ENCODE measurements at regions of chr1 and their contacts with region 1.

Region 1: DNA sequence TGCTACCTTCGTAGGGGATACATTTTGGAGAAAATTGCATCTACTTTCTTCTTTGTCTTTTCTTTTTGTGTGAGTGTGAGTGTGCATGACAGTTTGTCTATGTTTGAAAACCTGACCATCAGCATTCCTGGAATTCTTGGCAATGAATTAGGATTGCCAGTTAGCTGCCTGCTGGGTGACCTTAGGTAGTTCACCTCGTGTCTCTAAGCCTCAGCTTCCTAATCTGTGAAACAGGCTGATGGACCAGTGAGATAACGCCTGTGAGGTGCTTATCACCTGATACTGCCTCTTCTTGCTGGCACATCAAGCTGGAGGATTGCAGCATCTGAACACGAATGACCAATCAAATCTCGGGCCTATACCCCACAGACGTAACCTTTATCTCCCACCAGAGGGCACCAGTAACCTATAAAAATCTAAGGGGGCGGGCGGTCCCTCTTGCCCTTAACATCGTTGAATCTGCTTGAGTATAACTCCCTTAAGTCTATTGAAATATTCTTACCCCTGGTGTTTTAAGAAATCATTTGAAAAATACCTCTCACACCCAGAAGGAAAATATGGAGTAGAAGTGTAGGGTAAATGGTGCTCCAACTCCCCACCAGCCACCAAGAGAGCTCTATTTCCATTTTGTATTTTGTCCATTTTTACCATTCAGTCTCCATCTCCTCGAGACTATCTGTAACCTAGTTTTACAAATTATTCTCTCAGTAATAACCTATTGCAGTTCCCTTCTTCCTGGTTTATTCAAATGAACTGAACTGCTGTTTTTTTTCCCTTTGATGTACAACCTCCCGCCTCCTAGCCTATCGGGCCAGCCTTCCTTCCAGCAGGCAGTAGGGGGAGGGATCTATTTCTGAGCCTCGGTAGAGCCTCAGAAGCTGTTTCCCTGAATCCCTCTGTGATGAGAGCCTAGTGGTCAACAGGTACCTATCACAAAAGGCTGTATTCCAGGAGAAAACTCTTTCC is 49.7 kb downstream of the MDM4 start:
- DNase-seq: peak; percentile 48
- H3K4me3 ChIP-seq: no peak overlapping the region
- H3K27ac ChIP-seq: no peak overlapping the region
- H3K4me1 ChIP-seq: no peaks in the 10 kb centered on the region
- H3K27me3 ChIP-seq: no peaks in the 10 kb centered on the region
- CTCF ChIP-seq: peak; percentile 66

Region 2: DNA sequence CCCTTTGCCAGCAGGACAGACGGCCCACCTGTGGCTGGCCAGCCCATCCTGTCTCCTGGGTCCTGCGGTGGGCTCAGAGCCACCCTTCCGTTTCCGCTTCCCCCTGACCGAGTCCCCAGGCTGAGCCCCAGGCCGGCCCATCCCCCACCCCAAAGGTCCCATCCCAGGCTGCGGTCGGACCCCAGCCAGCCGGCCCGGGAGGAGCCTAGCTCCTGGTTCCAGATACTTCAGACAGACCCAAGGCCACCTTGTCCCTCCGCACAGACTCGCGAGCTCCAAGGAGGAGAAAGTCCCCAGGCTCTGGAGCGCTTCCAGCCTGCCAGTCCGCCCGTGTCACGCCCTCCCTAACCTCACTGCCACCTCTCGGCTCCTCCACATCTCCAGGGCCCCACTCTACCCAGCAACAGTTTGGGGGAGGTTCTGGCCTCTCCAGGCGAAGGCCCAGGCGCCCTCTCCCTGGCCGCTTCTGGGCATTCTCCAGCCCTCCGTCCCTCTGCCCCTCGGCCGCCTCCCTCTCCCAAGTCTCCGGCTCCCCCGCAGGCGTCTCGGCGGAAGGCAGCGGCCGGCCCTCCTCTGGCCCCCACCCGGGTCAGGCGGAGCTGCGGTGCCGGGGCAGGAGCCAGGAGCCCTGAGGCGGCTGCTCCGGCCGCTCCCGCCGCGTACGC is 118.8 kb after region 1 on chr1:
- intact Hi-C with region 1: no loop called
- DNase-seq: peak; percentile 49
- H3K4me3 ChIP-seq: peak overlapping the region; percentile 56
- H3K27ac ChIP-seq: peak overlapping the region; percentile 24
- H3K4me1 ChIP-seq: peaks cover 6% of the 10 kb centered on the region
- H3K27me3 ChIP-seq: peaks cover 3% of the 10 kb centered on the region
- CTCF ChIP-seq: no peak

Region 3: DNA sequence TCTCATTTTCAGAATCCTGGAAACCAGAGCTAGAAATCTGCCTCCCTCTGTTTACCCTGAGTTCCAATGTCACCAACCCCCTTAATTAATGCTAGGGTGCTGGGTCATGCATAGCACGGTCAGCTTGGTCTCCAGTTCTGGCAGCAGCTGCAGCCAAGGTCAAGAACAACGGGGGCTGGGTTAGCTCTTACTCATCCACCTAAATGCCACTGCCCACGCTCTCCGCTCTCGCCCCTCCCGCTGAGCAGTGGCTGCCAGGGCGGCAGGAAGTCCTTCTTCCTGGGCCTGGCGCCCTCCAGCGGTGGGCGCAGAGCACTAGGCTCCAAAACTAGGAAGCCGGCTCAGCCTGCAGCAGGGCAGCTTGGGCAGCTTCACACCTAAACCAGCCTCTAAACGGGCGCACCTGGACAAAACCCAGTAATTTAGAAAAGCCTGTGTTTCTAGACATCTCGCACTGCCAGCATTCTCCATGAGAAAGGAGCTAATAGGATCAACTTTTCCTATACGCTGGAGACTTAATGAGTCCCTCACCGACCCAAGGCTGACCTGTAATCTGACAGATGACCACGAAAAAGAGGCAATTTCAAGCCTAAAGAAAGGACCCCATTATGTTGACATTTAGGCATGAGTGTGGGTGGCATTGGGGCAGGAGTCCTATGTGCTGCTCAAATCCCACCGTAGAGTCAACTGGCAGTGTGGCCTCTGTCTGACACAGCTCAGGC is 198.0 kb after region 1 on chr1:
- intact Hi-C with region 1: loop called (anchors 2 kb)
- DNase-seq: peak; percentile 73
- H3K4me3 ChIP-seq: no peak overlapping the region
- H3K27ac ChIP-seq: no peak overlapping the region
- H3K4me1 ChIP-seq: no peaks in the 10 kb centered on the region
- H3K27me3 ChIP-seq: no peaks in the 10 kb centered on the region
- CTCF ChIP-seq: peak; percentile 84

Region 4: DNA sequence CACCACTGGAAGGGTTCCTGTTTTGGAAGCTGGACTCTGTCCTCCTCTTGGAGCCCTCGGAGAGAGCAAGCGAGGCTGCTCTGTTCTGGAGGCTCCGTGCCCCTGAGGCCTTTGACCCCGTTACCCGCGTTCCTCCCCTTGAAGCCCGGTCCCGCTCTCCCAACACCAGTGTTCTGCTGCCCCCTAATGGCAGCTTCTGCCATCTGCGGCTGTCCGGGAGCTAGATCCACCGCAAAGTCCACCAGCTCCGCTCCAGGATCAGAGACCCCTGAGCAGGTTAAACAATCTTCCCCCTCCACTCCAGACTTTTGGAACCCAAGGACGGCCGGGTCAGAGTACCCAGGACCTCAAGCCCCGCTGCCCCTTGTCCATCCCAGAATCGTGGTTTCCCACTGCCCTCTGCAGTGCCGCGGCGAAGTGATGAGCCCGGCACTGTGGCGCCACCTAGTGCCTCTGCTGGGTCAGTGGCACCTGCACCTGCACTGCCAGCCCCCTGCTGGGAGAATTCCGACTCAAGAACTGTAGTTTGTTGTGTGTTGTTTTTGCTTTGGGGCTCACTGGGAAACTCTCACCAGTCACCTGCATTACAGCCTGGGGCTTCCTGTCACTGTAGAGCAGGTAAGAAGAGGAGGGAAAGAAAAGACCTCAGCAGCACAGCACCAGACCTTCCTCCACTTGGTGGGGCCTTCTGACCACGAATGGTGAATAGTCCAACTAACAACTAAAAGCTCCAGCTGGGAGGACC is 241.2 kb after region 1 on chr1:
- intact Hi-C with region 1: loop called (anchors 2 kb)
- DNase-seq: peak; percentile 87
- H3K4me3 ChIP-seq: peak overlapping the region; percentile 26
- H3K27ac ChIP-seq: no peak overlapping the region
- H3K4me1 ChIP-seq: no peaks in the 10 kb centered on the region
- H3K27me3 ChIP-seq: no peaks in the 10 kb centered on the region
- CTCF ChIP-seq: peak; percentile 95

Region 5: DNA sequence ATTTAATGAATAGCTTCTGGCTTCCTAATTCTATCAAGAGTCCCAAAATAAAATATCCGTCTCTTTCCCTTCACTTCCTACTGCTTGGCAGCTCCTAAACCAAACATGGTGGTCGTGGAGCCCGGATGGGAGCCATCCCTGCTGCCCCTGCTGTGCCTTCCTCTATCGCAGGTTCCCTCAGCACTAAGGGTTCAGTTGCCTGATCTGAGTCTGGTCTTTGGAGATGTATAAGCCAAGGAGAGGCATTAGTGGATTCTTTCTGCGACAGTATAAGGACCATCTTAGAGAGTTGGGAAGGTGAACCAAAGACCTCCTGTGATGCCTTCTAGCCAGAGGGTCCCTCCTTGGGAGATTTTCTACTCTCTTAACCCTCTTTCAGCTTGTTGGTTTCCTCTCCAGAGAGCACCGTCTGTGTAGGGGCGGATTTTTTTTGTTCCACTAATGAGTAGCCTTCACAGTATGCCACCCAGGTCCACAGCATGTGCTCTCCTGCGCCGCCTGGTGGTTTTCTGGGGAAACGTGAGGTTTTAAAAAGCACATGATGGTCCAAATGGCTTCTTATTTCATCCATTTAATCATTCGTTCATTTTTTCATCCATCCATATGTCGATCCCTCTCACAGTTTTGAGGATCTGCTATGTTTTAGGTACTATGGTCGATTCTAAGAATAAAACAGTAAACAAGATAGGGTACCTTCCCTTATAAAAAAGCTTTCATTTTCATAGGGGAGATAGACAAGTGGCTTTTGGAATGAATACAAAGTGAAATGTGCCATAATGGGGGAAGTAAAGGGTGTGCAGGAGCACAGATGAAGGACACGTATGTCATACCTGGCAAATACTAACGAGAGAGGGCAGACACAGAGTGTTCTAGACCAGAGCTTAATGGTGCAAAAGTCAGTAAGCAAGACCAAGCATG is 375.8 kb after region 1 on chr1:
- intact Hi-C with region 1: loop called (anchors 10 kb)
- DNase-seq: peak; percentile 76
- H3K4me3 ChIP-seq: no peak overlapping the region
- H3K27ac ChIP-seq: no peak overlapping the region
- H3K4me1 ChIP-seq: no peaks in the 10 kb centered on the region
- H3K27me3 ChIP-seq: no peaks in the 10 kb centered on the region
- CTCF ChIP-seq: peak; percentile 91